Motor neuron (in vitro differentiated cells): ENCODE measurements at regions of chr10 and their contacts with region 1.

Region 1: DNA sequence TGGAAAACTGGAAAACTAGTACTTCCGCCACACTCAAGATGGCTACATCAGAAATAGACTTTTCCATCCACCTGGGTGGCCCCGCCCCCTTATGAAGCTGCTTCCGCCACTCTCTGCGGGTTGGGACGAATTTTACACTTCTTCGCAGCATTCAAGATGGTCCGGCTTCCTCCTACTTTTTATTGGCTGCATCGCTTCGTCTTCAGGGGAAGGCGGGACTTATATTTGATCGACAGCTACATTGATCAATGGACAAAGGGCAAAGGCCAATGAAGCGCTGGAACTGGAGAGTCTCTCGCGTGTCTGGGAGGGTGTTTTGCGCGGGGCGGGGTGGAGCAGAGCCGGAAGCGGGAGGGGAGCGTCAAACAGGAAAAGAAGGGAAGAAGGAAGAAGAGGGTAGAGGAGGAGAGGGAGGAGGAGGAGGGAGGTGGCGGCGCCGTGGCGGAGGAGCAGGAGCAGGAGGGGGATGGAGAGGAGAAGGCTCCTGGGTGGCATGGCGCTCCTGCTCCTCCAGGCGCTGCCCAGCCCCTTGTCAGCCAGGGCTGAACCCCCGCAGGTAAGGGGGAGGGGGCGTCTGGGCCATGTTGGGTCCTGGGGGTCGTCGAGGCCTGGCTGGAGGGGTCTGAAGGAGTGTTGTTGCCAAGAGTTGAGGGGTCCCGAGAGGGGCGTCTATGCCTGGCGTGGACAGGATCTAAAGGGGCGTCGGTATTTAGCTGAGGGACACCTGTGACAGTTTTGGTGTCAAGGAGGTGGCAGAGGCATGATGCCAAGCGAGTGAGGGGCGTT is at the start of gene WBP1L:
- ATAC-seq: peak; percentile 93 to 98 (median 96)
- H3K4me3 ChIP-seq: peak within 1 kb of the TSS; percentile 69 to 79 (median 69)
- H3K27ac ChIP-seq: peak within 1 kb of the TSS; percentile 18 to 46
- H3K4me1 ChIP-seq: peaks cover 0 to 8% of the 10 kb centered on the region in 2 donors
- total RNA-seq, gene WBP1L: 21.1 to 49.7 (median 26.7) TPM

Region 2: DNA sequence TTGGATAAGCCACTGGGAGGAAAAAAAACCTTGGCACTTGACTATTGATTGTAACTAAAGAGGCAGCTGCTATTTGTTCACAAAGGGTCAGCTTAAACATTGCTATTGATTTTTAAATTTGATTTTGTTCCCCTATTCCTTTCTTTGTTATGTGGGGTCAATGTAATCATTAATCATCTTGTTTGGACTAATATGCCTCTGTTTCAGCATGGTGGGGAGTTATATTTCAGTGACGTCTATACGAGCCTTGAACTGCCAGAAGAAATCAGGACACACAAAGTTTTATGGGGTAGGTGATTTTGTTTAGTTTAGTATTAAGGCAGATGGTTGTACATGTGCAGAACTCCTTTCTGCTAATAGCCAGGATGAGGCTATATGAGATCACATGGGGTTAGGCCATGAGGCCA is 133.0 kb after region 1 on chr10:
- in situ Hi-C with region 1: loop called in 1 of 9 experiments (anchors 25 kb)
- ATAC-seq: no peak
- H3K4me3 ChIP-seq: no peak overlapping the region
- H3K27ac ChIP-seq: no peak overlapping the region
- H3K4me1 ChIP-seq: peaks cover 0 to 6% of the 10 kb centered on the region in 2 donors

Region 3: DNA sequence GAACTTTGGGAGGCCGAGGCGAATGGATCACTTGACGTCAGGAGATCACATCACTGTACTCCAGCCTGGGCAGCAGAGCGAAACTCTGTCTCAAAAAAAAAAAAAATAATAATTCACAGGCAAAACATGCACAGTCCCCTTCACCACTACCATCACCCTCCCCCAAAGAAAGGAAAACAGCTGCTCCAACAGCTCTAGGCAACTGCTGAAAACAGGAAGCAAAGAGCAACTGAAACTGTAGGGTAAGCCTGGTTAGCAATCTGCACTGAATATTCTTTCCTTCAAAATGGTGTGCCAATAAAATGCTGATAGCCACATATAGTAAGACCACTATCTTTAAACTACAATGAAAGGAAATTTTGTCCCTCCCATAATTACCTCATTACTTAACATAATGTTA is 437.5 kb after region 1 on chr10:
- in situ Hi-C with region 1: no loop called
- ATAC-seq: no peak
- H3K4me3 ChIP-seq: no peak overlapping the region
- H3K27ac ChIP-seq: no peak overlapping the region
- H3K4me1 ChIP-seq: no peaks in the 10 kb centered on the region

Region 4: GRCh38 chr10:104521901-104522694 is 1778.3 kb after region 1 on chr10:
- in situ Hi-C with region 1: no loop called
- ATAC-seq: peak in 5 of 8 experiments; percentile 50 to 81 (median 74)
- H3K4me3 ChIP-seq: no peak overlapping the region
- H3K27ac ChIP-seq: no peak overlapping the region
- H3K4me1 ChIP-seq: peaks cover 5 to 11% of the 10 kb centered on the region in 2 donors